Mammary epithelial cell (primary cell): ENCODE measurements at regions of chr4 and their contacts with region 1.

Region 1: GRCh38 chr4:38948551-38948950 is 80.9 kb downstream of the FAM114A1 start:
- DNase-seq: peak; percentile 76
- H3K4me3 ChIP-seq: no peak overlapping the region
- H3K27ac ChIP-seq: peak overlapping the region; percentile 57
- H3K4me1 ChIP-seq: peaks cover 17% of the 10 kb centered on the region
- H3K27me3 ChIP-seq: no peaks in the 10 kb centered on the region
- CTCF ChIP-seq: no peak

Region 2: DNA sequence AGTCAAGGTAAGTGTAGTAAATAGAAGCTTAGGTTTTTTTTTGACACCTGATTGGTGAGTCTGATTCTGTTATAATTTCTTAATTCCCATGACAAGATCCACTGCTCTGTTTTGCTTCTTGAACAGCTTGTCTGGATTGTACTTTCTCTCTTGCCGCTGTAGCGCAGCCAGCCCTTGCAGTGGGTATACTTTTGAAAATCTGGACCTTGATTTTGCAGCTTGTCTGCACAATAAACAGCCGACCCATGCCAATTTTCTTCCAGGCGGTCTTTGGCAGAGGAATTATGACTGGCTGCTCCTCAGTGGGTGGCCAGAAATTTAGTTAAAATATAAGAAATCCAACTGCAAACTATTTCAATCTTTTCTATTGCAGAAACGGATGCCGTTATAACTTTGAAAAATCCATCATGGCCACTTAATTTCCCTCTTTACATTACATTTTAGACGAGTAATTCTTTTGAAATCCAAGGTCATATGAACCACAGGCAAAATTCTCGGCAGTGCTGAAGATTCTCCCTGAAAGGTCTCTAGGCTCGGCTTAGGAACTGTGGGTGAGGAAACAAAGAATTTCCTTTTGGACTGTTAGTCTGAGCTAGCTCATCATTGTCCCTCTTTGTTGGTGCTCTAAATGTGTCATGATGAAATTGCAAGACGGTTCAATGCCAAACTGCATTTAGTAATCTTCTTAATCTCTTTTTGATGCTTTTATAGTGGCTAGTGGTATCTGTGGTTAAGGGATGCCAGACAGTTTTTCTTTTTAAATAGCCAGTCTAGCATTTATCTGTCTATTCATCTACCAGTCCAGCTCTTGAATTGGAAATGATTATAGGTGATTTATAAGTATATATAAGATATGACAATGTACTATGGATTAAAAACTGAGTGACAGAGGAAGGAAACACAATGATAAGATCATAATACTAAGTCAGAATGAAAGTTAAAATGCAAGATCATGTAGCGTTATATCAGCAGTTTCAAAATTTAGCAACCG is 1019.8 kb before region 1 on chr4:
- CTCF ChIA-PET with region 1: no interaction called
- dilution Hi-C with region 1: no loop called
- in situ Hi-C with region 1: no loop called
- intact Hi-C with region 1: no loop called
- DNase-seq: no peak
- H3K4me3 ChIP-seq: no peak overlapping the region
- H3K27ac ChIP-seq: no peak overlapping the region
- H3K4me1 ChIP-seq: no peaks in the 10 kb centered on the region
- H3K27me3 ChIP-seq: no peaks in the 10 kb centered on the region
- CTCF ChIP-seq: no peak

Region 3: GRCh38 chr4:39032218-39033085 is 83.9 kb after region 1 on chr4 and contains the start of gene TMEM156:
- CTCF ChIA-PET with region 1: no interaction called
- dilution Hi-C with region 1: no loop called
- in situ Hi-C with region 1: no loop called
- intact Hi-C with region 1: loop called (anchors 5 kb)
- DNase-seq: peak; percentile 51
- H3K4me3 ChIP-seq: no peak within 1 kb of the TSS
- H3K27ac ChIP-seq: peak within 1 kb of the TSS; percentile 12
- H3K4me1 ChIP-seq: peaks cover 29% of the 10 kb centered on the region
- H3K27me3 ChIP-seq: no peaks in the 10 kb centered on the region
- CTCF ChIP-seq: no peak
- total RNA-seq, gene TMEM156: 1.2 TPM in 1 of 2 donors, not detected in the other